ENCODE measurements at regions of chr2 and their contacts with region 1.

Region 1: GRCh38 chr2:16069933-16070647 is 129.7 kb downstream of the MYCN start:
- DNase-seq: peak; percentile 11
- H3K4me3 ChIP-seq: no peak overlapping the region
- H3K27ac ChIP-seq: no peak overlapping the region
- H3K4me1 ChIP-seq: no peaks in the 10 kb centered on the region
- H3K27me3 ChIP-seq: no peaks in the 10 kb centered on the region
- CTCF ChIP-seq: no peak

Region 2: GRCh38 chr2:15858466-15858865 is 211.6 kb before region 1 on chr2:
- CTCF ChIA-PET with region 1: no interaction called
- dilution Hi-C with region 1: loop called (anchors 10 kb)
- in situ Hi-C with region 1: no loop called
- intact Hi-C with region 1: no loop called
- DNase-seq: no peak
- H3K4me3 ChIP-seq: no peak overlapping the region
- H3K27ac ChIP-seq: no peak overlapping the region
- H3K4me1 ChIP-seq: no peaks in the 10 kb centered on the region
- H3K27me3 ChIP-seq: no peaks in the 10 kb centered on the region
- CTCF ChIP-seq: no peak

Region 3: GRCh38 chr2:16034151-16034973 is 35.7 kb before region 1 on chr2:
- CTCF ChIA-PET with region 1: no interaction called
- dilution Hi-C with region 1: no loop called
- in situ Hi-C with region 1: no loop called
- intact Hi-C with region 1: no loop called
- DNase-seq: no peak
- H3K4me3 ChIP-seq: no peak overlapping the region
- H3K27ac ChIP-seq: no peak overlapping the region
- H3K4me1 ChIP-seq: no peaks in the 10 kb centered on the region
- H3K27me3 ChIP-seq: no peaks in the 10 kb centered on the region
- CTCF ChIP-seq: no peak

Region 4: GRCh38 chr2:16166431-16166981 is 96.4 kb after region 1 on chr2:
- CTCF ChIA-PET with region 1: no interaction called
- dilution Hi-C with region 1: loop called (anchors 5 kb)
- in situ Hi-C with region 1: no loop called
- intact Hi-C with region 1: no loop called
- DNase-seq: no peak
- H3K4me3 ChIP-seq: no peak overlapping the region
- H3K27ac ChIP-seq: no peak overlapping the region
- H3K4me1 ChIP-seq: no peaks in the 10 kb centered on the region
- H3K27me3 ChIP-seq: no peaks in the 10 kb centered on the region
- CTCF ChIP-seq: no peak

Measured in mammary epithelial cell (primary cell).